AG04450 (cell line): ENCODE measurements at regions of chr2 and their contacts with region 1.

Region 1: DNA sequence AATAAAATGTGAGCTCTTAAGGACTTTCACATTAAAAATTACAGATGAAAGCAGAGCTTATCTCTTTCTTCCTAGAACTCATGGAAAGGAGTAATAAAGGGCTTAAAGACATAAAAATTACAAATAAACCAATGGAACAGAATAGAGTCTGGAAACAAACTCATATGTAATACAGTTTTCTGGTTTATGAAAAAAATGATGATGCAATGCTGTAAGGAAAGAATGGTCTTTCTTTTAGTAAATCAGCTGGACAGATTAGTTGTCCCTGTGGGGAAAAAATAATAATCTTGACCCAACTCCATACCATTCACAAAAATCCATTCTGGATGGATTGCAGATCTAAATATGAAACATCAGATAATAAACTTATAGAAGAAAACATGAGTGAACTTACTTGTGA is 54.2 kb downstream of the TMEM185B start:
- DNase-seq: no peak
- H3K4me3 ChIP-seq: no peak overlapping the region
- H3K27ac ChIP-seq: no peak overlapping the region
- H3K27me3 ChIP-seq: no peaks in the 10 kb centered on the region
- CTCF ChIP-seq: no peak

Region 2: GRCh38 chr2:120109186-120110061 is 59.6 kb before region 1 on chr2:
- CTCF ChIA-PET with region 1: interaction called, 87 read pairs
- POLR2A ChIA-PET with region 1: no interaction called
- DNase-seq: no peak
- H3K4me3 ChIP-seq: no peak overlapping the region
- H3K27ac ChIP-seq: no peak overlapping the region
- H3K27me3 ChIP-seq: no peaks in the 10 kb centered on the region
- CTCF ChIP-seq: peak; percentile 38